Dorsolateral prefrontal cortex (tissue), 120 donors: ENCODE measurements at regions of chr13 and their contacts with region 1.

Region 1: DNA sequence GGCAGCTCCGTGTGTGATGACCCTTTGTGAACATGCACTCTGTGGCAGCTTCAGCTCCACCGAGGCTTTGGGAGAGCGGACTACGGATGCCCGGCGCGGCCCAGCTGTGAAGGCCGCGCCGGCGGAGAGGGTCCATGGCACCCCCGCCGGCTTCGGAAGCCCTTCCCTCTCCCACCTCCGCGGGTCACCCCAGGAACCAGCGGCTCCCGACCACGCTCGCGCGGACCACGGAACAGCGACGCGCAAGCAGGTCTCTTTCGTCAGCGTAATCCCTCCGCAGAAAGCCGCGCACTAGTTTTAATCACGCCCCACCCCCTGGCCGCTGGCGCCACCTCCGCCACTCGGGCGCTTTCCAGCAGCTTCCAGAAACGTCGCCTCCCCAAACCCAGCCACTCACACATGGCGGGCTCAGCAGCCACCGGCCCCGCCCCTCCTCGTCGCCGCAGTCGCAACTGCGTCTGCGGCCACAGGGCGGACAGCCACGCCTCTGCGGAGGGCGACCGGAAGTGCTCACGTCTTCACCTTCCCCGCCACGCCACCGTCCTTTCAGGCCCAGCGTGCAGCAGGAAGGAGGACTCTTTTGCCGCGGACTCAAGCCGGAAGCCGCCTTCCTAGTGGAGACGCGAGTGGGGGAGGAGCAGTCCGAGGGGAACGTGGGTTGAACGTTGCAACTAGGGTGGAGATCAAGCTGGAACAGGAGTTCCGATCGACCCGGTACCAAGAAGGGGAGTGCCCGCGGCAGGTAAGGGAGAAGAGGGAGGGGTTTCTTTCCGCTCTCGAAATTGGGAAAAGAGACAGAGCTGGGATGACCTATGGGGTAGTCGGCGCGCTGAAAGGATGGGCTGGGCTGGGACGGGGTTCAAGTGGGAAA is at the start of gene USPL1:
- DNase-seq: peak; percentile 95 to 98 (median 96)
- H3K4me3 ChIP-seq: peak within 1 kb of the TSS; percentile 67 to 99 (median 88)
- H3K27ac ChIP-seq: peak within 1 kb of the TSS; percentile 97 to 100 (median 100)
- H3K27me3 ChIP-seq: no peaks in the 10 kb centered on the region
- CTCF ChIP-seq: peak in 48 of 56 donors; percentile 11 to 63 (median 42)
- total RNA-seq, gene USPL1: 14.6 to 43.5 (median 21.5) TPM

Region 2: DNA sequence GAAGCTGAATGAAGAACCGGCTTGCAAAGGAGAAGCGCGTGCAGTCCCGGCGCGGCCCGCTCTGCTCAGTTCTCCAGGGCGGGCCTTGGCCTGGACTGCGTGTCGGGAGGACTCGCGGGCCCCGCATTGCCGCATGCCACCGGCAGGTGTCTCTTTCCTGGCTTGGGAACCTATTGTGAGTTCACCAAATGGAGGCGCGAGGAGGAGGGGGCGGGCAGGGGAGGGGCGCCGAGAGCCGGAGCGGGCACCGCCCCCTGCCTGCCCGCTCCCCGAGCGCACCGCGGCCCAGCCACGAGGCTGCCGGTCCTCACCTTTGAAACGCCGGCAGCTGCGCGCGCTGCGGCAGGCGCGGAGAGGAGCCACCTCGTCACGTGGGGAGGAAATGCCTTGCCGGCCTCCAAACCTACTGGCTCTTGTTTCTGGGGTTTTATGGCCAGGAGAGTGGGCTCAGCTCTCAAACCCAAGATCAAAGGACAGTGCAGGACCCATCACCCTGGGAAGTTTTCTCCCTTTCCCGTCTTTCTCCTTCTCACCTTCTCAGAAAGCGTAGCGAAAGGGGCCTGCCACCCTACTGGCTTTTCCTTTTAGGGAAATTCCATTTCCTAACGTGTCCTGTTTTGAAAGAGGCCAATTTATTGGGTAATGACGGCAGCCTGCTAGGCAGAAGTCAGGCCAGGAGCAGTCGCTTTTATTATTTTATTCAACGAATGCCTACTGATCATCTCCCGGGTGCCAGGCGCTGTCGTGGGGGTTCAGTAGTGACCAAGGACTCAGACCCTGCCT is 209.0 kb before region 1 on chr13:
- intact Hi-C with region 1: loop called in 1 of 2 experiments (anchors 5 kb)
- DNase-seq: peak; percentile 85 to 92 (median 90)
- H3K4me3 ChIP-seq: peak overlapping the region; percentile 27 to 71 (median 56)
- H3K27ac ChIP-seq: peak overlapping the region; percentile 1 to 93 (median 82)
- H3K27me3 ChIP-seq: no peaks in the 10 kb centered on the region
- CTCF ChIP-seq: peak; percentile 44 to 91 (median 77)

Region 3: GRCh38 chr13:30577401-30577852 is 40.1 kb before region 1 on chr13:
- intact Hi-C with region 1: no loop called
- DNase-seq: no peak
- H3K4me3 ChIP-seq: no peak overlapping the region
- H3K27ac ChIP-seq: no peak overlapping the region
- H3K27me3 ChIP-seq: no peaks in the 10 kb centered on the region
- CTCF ChIP-seq: no peak

Region 4: GRCh38 chr13:30673669-30674521 is 56.3 kb after region 1 on chr13:
- intact Hi-C with region 1: loop called (anchors 2 kb)
- DNase-seq: peak; percentile 74 to 90 (median 86)
- H3K4me3 ChIP-seq: peak overlapping the region; percentile 33 to 77 (median 61)
- H3K27ac ChIP-seq: peak overlapping the region; percentile 27 to 91 (median 83)
- H3K27me3 ChIP-seq: no peaks in the 10 kb centered on the region
- CTCF ChIP-seq: peak; percentile 32 to 94 (median 76)

Region 5: GRCh38 chr13:30802953-30803478 is 185.5 kb after region 1 on chr13:
- intact Hi-C with region 1: loop called (anchors 5 to 10 kb)
- DNase-seq: peak; percentile 79 to 95 (median 90)
- H3K4me3 ChIP-seq: peak overlapping the region in 58 of 59 donors; percentile 20 to 71 (median 53)
- H3K27ac ChIP-seq: peak overlapping the region in 31 of 59 donors; percentile 5 to 78 (median 40)
- H3K27me3 ChIP-seq: no peaks in the 10 kb centered on the region
- CTCF ChIP-seq: peak; percentile 47 to 99 (median 96)

Region 6: GRCh38 chr13:31161828-31162590 is 544.5 kb after region 1 on chr13 and contains the start of gene HSPH1:
- intact Hi-C with region 1: loop called (anchors 5 kb)
- DNase-seq: peak; percentile 96 to 99 (median 98)
- H3K4me3 ChIP-seq: peak within 1 kb of the TSS; percentile 68 to 100 (median 91)
- H3K27ac ChIP-seq: peak within 1 kb of the TSS; percentile 88 to 100 (median 100)
- H3K27me3 ChIP-seq: no peaks in the 10 kb centered on the region
- CTCF ChIP-seq: peak in 23 of 56 donors; percentile 3 to 55 (median 20)
- total RNA-seq, gene HSPH1: 90.5 to 959 (median 242) TPM

Region 7: DNA sequence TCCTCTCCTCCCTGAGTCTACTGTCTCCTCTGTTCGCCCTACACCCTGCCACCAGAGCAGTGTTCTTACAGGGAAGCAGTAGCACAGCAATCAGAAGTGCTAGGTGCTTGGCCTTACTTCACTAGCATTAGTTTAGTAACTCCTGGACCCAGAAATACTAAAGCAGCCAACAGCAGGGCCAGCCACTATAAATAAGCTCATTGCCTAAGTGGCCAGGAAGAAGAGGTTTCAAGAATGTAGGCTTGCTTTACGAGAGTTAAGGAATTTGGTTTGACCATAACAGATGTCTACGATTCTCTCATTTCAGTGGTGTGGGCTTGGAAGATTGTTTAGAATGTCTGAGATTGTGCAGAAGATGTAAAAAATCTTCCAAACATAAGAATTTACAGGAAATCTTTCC is 1594.3 kb after region 1 on chr13:
- intact Hi-C with region 1: no loop called
- DNase-seq: no peak
- H3K4me3 ChIP-seq: no peak overlapping the region
- H3K27ac ChIP-seq: no peak overlapping the region
- H3K27me3 ChIP-seq: no peaks in the 10 kb centered on the region
- CTCF ChIP-seq: no peak